B cell (primary cell): ENCODE measurements at regions of chr17 and their contacts with region 1.

Region 1: DNA sequence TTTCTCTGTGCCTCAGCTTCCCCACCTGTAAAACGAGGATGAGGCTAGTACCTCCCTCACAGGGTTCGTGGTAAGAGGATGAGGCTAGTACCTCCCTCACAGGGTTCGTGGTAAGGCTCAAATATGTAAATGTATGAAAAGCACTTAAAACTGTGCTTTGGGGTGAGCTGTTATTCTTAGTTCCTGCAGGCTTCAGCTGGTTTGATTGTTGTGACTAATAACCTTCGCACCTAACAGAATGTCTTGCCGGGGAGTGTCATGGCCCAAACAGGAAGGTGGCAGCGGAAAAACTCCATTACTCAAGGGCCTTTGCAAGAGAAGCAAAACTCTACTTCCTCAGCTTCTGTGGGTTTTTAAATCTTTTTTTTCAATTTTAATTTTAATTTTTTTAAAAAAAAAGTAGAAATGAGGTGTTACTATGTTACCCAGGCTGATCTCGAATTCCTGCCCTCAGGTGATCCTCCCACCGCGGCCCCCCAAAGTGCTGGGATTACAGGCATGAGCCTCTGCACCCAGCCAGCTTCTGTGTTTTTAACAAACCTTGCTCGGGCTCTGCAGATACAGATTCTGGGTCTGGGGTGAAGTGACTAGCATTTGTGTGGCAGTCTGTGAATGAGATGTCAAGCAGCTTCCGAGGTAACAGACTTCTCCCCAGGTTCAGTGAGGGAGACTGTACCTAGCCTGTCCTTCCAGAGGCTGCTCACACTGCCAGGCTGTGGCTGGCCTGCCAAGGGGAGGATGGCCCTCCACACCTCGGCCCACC is 103.0 kb downstream of the RAB11FIP4 start:
- DNase-seq: peak; percentile 83
- ATAC-seq: peak; percentile 61
- H3K4me3 ChIP-seq: peak overlapping the region in 4 of 5 experiments; percentile 10 to 41 (median 18)
- H3K4me3 Mint-ChIP-seq: peak overlapping the region; percentile 83
- H3K27ac ChIP-seq: peak overlapping the region; percentile 80 to 90
- H3K27ac Mint-ChIP-seq: peak overlapping the region; percentile 99
- H3K4me1 ChIP-seq: peaks cover 88 to 100% of the 10 kb centered on the region in 2 donors
- H3K4me1 Mint-ChIP-seq: peaks cover 93% of the 10 kb centered on the region
- H3K27me3 ChIP-seq: no peaks in the 10 kb centered on the region
- H3K27me3 Mint-ChIP-seq: no peaks in the 10 kb centered on the region
- CTCF ChIP-seq: no peak

Region 2: GRCh38 chr17:30970831-30971567 is 523.4 kb before region 1 on chr17 and contains the start of gene RNF135:
- CTCF ChIA-PET with region 1: no interaction called
- POLR2A ChIA-PET with region 1: no interaction called
- intact Hi-C with region 1: loop called (anchors 5 kb)
- DNase-seq: peak; percentile 86
- ATAC-seq: peak; percentile 67
- H3K4me3 ChIP-seq: peak within 1 kb of the TSS; percentile 87 to 94 (median 91)
- H3K4me3 Mint-ChIP-seq: peak within 1 kb of the TSS; percentile 99
- H3K27ac ChIP-seq: peak within 1 kb of the TSS; percentile 90
- H3K27ac Mint-ChIP-seq: peak within 1 kb of the TSS; percentile 94
- H3K4me1 ChIP-seq: peaks cover 31 to 46% of the 10 kb centered on the region in 2 donors
- H3K4me1 Mint-ChIP-seq: peaks cover 46% of the 10 kb centered on the region
- H3K27me3 ChIP-seq: no peaks in the 10 kb centered on the region
- H3K27me3 Mint-ChIP-seq: no peaks in the 10 kb centered on the region
- CTCF ChIP-seq: peak; percentile 43
- total RNA-seq, gene RNF135: 22.3 and 23.4 TPM in 2 replicates

Region 3: GRCh38 chr17:31357831-31358394 is 136.5 kb before region 1 on chr17:
- CTCF ChIA-PET with region 1: no interaction called
- POLR2A ChIA-PET with region 1: no interaction called
- intact Hi-C with region 1: no loop called
- DNase-seq: no peak
- ATAC-seq: no peak
- H3K4me3 ChIP-seq: no peak overlapping the region
- H3K4me3 Mint-ChIP-seq: no peak overlapping the region
- H3K27ac ChIP-seq: no peak overlapping the region
- H3K27ac Mint-ChIP-seq: no peak overlapping the region
- H3K4me1 ChIP-seq: no peaks in the 10 kb centered on the region
- H3K4me1 Mint-ChIP-seq: no peaks in the 10 kb centered on the region
- H3K27me3 ChIP-seq: no peaks in the 10 kb centered on the region
- H3K27me3 Mint-ChIP-seq: no peaks in the 10 kb centered on the region
- CTCF ChIP-seq: no peak

Region 4: DNA sequence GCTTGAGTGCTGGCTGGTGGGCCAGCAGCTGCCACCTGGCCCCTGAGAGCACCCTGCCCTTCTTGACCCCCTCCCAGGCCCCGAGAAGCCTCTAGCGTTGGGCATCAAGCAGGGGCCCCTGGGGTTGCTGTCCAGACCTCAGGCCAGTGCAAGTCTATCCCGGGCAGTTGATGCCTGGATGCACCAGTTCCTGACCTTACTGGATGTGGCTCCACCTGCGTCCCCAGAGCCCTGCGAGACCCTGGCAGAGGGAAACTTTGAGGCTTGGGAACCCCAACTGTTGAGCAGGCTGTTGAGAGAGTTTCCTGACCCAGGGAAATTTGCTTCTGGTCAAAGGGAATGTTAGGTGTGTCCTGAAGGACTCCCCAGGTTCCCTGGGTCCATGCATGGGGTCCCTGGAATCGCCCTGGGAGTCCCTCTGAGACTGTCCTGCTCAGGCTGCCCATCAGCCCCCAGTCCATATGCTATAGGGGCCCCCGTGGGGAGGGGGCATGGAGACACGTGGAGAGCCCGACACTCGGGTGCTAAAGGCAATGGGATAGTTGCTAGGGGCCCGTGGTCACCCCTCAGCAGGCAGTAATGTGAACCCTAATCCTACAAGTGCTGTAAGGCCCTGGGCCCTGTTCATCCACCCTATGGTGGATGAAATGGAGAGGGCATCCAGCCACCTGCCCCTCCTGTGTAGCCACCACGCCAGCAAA is 56.6 kb before region 1 on chr17:
- CTCF ChIA-PET with region 1: interaction called, 20 read pairs
- POLR2A ChIA-PET with region 1: no interaction called
- intact Hi-C with region 1: no loop called
- DNase-seq: no peak
- ATAC-seq: no peak
- H3K4me3 ChIP-seq: no peak overlapping the region
- H3K4me3 Mint-ChIP-seq: no peak overlapping the region
- H3K27ac ChIP-seq: no peak overlapping the region
- H3K27ac Mint-ChIP-seq: no peak overlapping the region
- H3K4me1 ChIP-seq: peaks cover 3 to 11% of the 10 kb centered on the region in 2 donors
- H3K4me1 Mint-ChIP-seq: peaks cover 7% of the 10 kb centered on the region
- H3K27me3 ChIP-seq: peaks cover 0 to 5% (median 0%) of the 10 kb centered on the region in 4 experiments
- H3K27me3 Mint-ChIP-seq: no peaks in the 10 kb centered on the region
- CTCF ChIP-seq: no peak

Region 5: GRCh38 chr17:31517524-31517923 is 23.1 kb after region 1 on chr17:
- CTCF ChIA-PET with region 1: interaction called, 94 read pairs
- POLR2A ChIA-PET with region 1: interaction called, 4 read pairs
- intact Hi-C with region 1: no loop called
- DNase-seq: no peak
- ATAC-seq: no peak
- H3K4me3 ChIP-seq: no peak overlapping the region
- H3K4me3 Mint-ChIP-seq: no peak overlapping the region
- H3K27ac ChIP-seq: no peak overlapping the region
- H3K27ac Mint-ChIP-seq: no peak overlapping the region
- H3K4me1 ChIP-seq: peaks cover 0 to 5% of the 10 kb centered on the region in 2 donors
- H3K4me1 Mint-ChIP-seq: peaks cover 14% of the 10 kb centered on the region
- H3K27me3 ChIP-seq: no peaks in the 10 kb centered on the region
- H3K27me3 Mint-ChIP-seq: no peaks in the 10 kb centered on the region
- CTCF ChIP-seq: no peak

Region 6: GRCh38 chr17:31533546-31534155 is 39.2 kb after region 1 on chr17:
- CTCF ChIA-PET with region 1: interaction called, 5 read pairs
- POLR2A ChIA-PET with region 1: interaction called, 14 read pairs
- intact Hi-C with region 1: loop called (anchors 1 kb)
- DNase-seq: no peak
- ATAC-seq: no peak
- H3K4me3 ChIP-seq: no peak overlapping the region
- H3K4me3 Mint-ChIP-seq: no peak overlapping the region
- H3K27ac ChIP-seq: no peak overlapping the region
- H3K27ac Mint-ChIP-seq: no peak overlapping the region
- H3K4me1 ChIP-seq: peaks cover 41 to 53% of the 10 kb centered on the region in 2 donors
- H3K4me1 Mint-ChIP-seq: peaks cover 45% of the 10 kb centered on the region
- H3K27me3 ChIP-seq: no peaks in the 10 kb centered on the region
- H3K27me3 Mint-ChIP-seq: no peaks in the 10 kb centered on the region
- CTCF ChIP-seq: no peak

Region 7: DNA sequence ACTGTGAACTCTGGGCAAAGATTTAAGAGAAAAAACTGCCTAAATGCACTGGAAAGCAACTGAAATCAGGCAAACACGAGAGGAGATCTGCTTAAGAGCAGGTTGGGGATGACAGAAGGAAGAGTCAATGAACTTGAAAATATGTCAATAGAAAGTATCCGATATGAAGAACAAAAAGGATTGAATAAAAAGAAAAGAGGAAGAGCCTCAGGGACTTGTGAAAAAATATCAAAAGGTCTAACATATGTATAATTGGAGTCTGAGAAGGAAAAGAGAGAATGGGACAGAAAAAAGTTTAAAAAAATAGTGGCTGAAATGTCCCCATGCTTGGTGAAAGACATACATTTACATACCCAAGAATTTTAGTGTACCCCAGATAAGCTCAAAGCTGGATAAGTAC is 169.1 kb after region 1 on chr17:
- CTCF ChIA-PET with region 1: no interaction called
- POLR2A ChIA-PET with region 1: no interaction called
- intact Hi-C with region 1: no loop called
- DNase-seq: no peak
- ATAC-seq: no peak
- H3K4me3 ChIP-seq: no peak overlapping the region
- H3K4me3 Mint-ChIP-seq: no peak overlapping the region
- H3K27ac ChIP-seq: no peak overlapping the region
- H3K27ac Mint-ChIP-seq: no peak overlapping the region
- H3K4me1 ChIP-seq: no peaks in the 10 kb centered on the region
- H3K4me1 Mint-ChIP-seq: no peaks in the 10 kb centered on the region
- H3K27me3 ChIP-seq: peaks cover 0 to 10% (median 1%) of the 10 kb centered on the region in 4 experiments
- H3K27me3 Mint-ChIP-seq: peaks cover 20% of the 10 kb centered on the region
- CTCF ChIP-seq: no peak

Region 8: DNA sequence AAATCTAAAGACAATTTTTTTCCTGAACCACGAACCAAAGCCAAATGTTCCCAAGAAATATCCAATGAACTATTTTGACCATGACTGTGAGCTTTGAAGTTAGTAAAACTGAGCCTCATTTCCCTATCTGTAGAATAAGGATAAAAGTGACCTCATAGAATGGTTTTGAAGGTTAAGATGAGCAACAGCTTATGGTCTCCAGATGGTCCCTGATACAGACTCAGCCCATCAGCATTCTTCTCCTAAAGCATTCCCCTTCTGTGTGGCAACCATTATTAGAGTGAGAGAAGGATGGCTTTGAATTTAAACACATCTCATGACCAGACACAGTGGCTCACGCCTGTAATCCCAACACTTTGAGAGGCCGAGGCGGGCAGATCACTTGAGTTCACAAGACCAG is 294.5 kb after region 1 on chr17:
- CTCF ChIA-PET with region 1: no interaction called
- POLR2A ChIA-PET with region 1: interaction called, 10 read pairs
- intact Hi-C with region 1: no loop called
- DNase-seq: no peak
- ATAC-seq: no peak
- H3K4me3 ChIP-seq: no peak overlapping the region
- H3K4me3 Mint-ChIP-seq: no peak overlapping the region
- H3K27ac ChIP-seq: no peak overlapping the region
- H3K27ac Mint-ChIP-seq: no peak overlapping the region
- H3K4me1 ChIP-seq: peaks cover 0 to 4% of the 10 kb centered on the region in 2 donors
- H3K4me1 Mint-ChIP-seq: peaks cover 9% of the 10 kb centered on the region
- H3K27me3 ChIP-seq: no peaks in the 10 kb centered on the region
- H3K27me3 Mint-ChIP-seq: no peaks in the 10 kb centered on the region
- CTCF ChIP-seq: no peak